H1 (cell line): ENCODE measurements at regions of chr11 and their contacts with region 1.

Region 1: GRCh38 chr11:95739108-95739938 is 50.3 kb downstream of the FAM76B start:
- DNase-seq: no peak
- H3K4me3 ChIP-seq: no peak overlapping the region
- H3K27ac ChIP-seq: no peak overlapping the region
- H3K4me1 ChIP-seq: no peaks in the 10 kb centered on the region
- H3K27me3 ChIP-seq: no peaks in the 10 kb centered on the region
- CTCF ChIP-seq: peak; percentile 25 to 45 (median 28); a peak in 3 of 4 replicates
- EP300 ChIP-seq: no peak
- POLR2A ChIP-seq: no peak
- RAD21 ChIP-seq: peak; percentile 37 to 46; a peak in 3 of 4 replicates

Region 2: GRCh38 chr11:95727620-95728019 is 11.7 kb before region 1 on chr11:
- CTCF ChIA-PET with region 1: interaction called, 18 read pairs
- POLR2A ChIA-PET with region 1: no interaction called
- DNase-seq: no peak
- H3K4me3 ChIP-seq: no peak overlapping the region
- H3K27ac ChIP-seq: no peak overlapping the region
- H3K4me1 ChIP-seq: no peaks in the 10 kb centered on the region
- H3K27me3 ChIP-seq: no peaks in the 10 kb centered on the region
- CTCF ChIP-seq: no peak
- EP300 ChIP-seq: no peak
- POLR2A ChIP-seq: no peak
- RAD21 ChIP-seq: no peak

Region 3: GRCh38 chr11:95853862-95854261 is 114.5 kb after region 1 on chr11:
- CTCF ChIA-PET with region 1: no interaction called
- POLR2A ChIA-PET with region 1: no interaction called
- DNase-seq: no peak
- H3K4me3 ChIP-seq: no peak overlapping the region
- H3K27ac ChIP-seq: no peak overlapping the region
- H3K4me1 ChIP-seq: no peaks in the 10 kb centered on the region
- H3K27me3 ChIP-seq: no peaks in the 10 kb centered on the region
- CTCF ChIP-seq: no peak
- EP300 ChIP-seq: no peak
- POLR2A ChIP-seq: no peak
- RAD21 ChIP-seq: no peak